ENCODE measurements at regions of chr12 and their contacts with region 1.

Region 1: GRCh38 chr12:116080415-116080814 is 197.1 kb downstream of the MED13L start:
- DNase-seq: no peak
- ATAC-seq: peak; percentile 95
- H3K4me3 Mint-ChIP-seq: no peak overlapping the region
- H3K27ac Mint-ChIP-seq: no peak overlapping the region
- H3K4me1 Mint-ChIP-seq: peaks cover 32% of the 10 kb centered on the region
- H3K27me3 Mint-ChIP-seq: no peaks in the 10 kb centered on the region

Region 2: GRCh38 chr12:116099652-116100432 is 19.4 kb after region 1 on chr12:
- CTCF ChIA-PET with region 1: no interaction called
- POLR2A ChIA-PET with region 1: no interaction called
- intact Hi-C with region 1: loop called (anchors 1 to 2 kb)
- DNase-seq: peak; percentile 22
- ATAC-seq: peak; percentile 89
- H3K4me3 Mint-ChIP-seq: no peak overlapping the region
- H3K27ac Mint-ChIP-seq: peak overlapping the region; percentile 69
- H3K4me1 Mint-ChIP-seq: peaks cover 35% of the 10 kb centered on the region
- H3K27me3 Mint-ChIP-seq: no peaks in the 10 kb centered on the region

Region 3: DNA sequence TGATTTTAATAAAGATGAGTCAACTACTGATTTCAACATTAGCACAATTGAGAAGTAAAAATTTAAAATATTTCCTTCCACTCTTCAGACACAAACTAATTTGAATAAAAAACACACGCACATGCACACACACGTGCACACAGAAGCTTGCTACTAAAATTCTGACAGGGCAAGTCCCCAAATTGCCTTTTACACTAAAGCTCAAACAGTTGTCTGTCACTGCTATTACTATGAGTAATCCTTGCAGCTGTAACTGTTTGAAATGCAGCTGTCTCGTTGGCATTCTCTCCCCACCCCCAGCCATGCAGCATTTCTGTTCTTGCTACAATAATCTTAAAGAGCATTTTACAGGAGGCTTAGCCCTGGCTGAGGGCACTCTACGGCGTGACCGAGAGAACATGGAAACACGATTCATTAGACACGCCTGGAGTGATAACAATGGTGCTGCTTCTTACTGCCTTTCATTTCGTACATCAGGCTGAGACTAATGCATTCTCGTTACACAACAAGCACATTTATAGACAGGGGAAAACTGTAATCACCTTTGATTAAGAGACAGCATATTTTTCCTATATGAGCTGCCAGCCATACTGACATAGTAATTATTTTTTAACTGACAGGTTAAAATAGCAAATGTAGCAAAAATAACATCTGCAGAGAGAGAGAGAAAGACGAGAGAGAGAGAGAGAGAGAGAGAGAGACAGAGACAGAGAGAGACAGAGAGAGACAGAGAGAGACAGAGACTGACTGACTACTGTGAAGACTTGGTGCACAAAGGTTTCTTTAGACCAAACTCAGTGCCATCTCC is 43.2 kb after region 1 on chr12:
- CTCF ChIA-PET with region 1: no interaction called
- POLR2A ChIA-PET with region 1: no interaction called
- intact Hi-C with region 1: loop called in 1 of 2 experiments (anchors 5 kb)
- DNase-seq: peak; percentile 73
- ATAC-seq: peak; percentile 85
- H3K4me3 Mint-ChIP-seq: peak overlapping the region; percentile 19
- H3K27ac Mint-ChIP-seq: peak overlapping the region; percentile 16
- H3K4me1 Mint-ChIP-seq: peaks cover 68% of the 10 kb centered on the region
- H3K27me3 Mint-ChIP-seq: no peaks in the 10 kb centered on the region

Region 4: DNA sequence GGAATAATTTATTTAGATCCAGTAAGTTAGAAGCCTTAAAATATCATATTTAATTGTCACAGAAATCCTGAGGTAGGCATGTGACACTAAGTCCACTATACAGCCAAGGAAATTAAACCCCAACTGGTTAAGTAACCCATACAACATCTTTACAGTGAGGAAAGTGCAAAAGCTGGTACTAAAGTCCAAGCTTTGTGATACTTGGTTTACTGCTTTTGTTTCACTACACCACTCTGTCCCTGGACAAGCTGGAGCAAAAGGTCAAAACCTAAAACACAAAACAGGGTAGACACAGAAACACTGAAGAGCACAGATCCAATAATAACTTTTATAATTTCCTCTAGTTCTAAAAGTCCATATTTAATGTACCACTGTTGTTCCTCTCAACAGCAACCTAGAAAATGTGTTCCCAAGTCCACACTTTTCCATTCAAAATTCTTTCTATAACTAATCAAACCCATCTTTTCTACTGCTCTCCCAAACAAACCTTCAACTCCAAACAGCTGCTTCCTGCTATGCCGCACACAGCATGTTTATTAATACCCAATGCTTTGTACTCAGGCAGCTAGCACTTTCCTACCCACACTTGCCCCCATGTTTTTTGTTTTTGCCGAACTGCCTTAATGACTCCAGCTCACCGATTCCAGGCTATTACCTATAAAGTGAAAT is 106.2 kb after region 1 on chr12:
- CTCF ChIA-PET with region 1: no interaction called
- POLR2A ChIA-PET with region 1: no interaction called
- intact Hi-C with region 1: loop called in 1 of 2 experiments (anchors 5 kb)
- DNase-seq: no peak
- ATAC-seq: no peak
- H3K4me3 Mint-ChIP-seq: no peak overlapping the region
- H3K27ac Mint-ChIP-seq: peak overlapping the region; percentile 53
- H3K4me1 Mint-ChIP-seq: peaks cover 86% of the 10 kb centered on the region
- H3K27me3 Mint-ChIP-seq: no peaks in the 10 kb centered on the region

Region 5: GRCh38 chr12:116236148-116236731 is 155.8 kb after region 1 on chr12:
- CTCF ChIA-PET with region 1: no interaction called
- POLR2A ChIA-PET with region 1: no interaction called
- intact Hi-C with region 1: no loop called
- DNase-seq: peak; percentile 66
- ATAC-seq: peak; percentile 60
- H3K4me3 Mint-ChIP-seq: peak overlapping the region; percentile 14
- H3K27ac Mint-ChIP-seq: peak overlapping the region; percentile 63
- H3K4me1 Mint-ChIP-seq: peaks cover 35% of the 10 kb centered on the region
- H3K27me3 Mint-ChIP-seq: no peaks in the 10 kb centered on the region

Measured in activated CD4-positive, alpha-beta T cell treated with anti-CD3 and anti-CD28 coated beads for 36 hours (primary cell).